ENCODE measurements at regions of chr7 and their contacts with region 1.

Region 1: GRCh38 chr7:40763318-40764287 is 628.8 kb downstream of the SUGCT start:
- DNase-seq: no peak
- ATAC-seq: no peak

Region 2: DNA sequence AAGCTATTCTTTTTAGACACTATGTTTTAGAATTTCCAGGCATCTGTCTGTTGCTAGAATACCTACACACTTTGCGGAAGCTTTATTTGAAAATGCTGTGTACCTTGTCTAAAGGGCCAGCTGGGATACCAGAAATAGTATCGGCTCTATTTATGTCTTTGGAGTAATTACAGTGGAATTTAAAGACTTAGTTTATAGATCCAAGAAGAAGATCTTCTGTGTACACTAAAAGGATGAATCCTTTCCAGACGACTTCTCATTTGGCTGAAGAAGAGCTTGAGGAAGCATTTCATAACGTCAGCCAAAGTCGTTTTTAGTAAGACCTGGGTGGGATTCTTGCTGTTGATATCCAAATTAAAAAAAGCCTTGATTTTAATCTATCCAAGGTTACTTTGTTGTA is 573.4 kb after region 1 on chr7:
- intact Hi-C with region 1: loop called (anchors 5 kb)
- DNase-seq: no peak
- ATAC-seq: no peak

Measured in sciatic nerve (tissue), 2 donors.